ENCODE measurements at regions of chr3 and their contacts with region 1.

Region 1: GRCh38 chr3:14774431-14774830 is 44.3 kb upstream of the FGD5 start:
- DNase-seq: peak; percentile 20
- ATAC-seq: peak; percentile 36
- H3K4me3 Mint-ChIP-seq: no peak overlapping the region
- H3K27ac Mint-ChIP-seq: no peak overlapping the region
- H3K4me1 Mint-ChIP-seq: peaks cover 22% of the 10 kb centered on the region
- H3K27me3 Mint-ChIP-seq: no peaks in the 10 kb centered on the region
- CTCF ChIP-seq: no peak

Region 2: GRCh38 chr3:14646589-14647413 is 127.6 kb before region 1 on chr3:
- CTCF ChIA-PET with region 1: no interaction called
- POLR2A ChIA-PET with region 1: no interaction called
- DNase-seq: no peak
- ATAC-seq: peak; percentile 27
- H3K4me3 Mint-ChIP-seq: no peak overlapping the region
- H3K27ac Mint-ChIP-seq: peak overlapping the region; percentile 43; the same call in 1 of the 2 replicates
- H3K4me1 Mint-ChIP-seq: peaks cover 3% of the 10 kb centered on the region
- H3K27me3 Mint-ChIP-seq: peaks cover 22% of the 10 kb centered on the region
- CTCF ChIP-seq: no peak

Region 3: DNA sequence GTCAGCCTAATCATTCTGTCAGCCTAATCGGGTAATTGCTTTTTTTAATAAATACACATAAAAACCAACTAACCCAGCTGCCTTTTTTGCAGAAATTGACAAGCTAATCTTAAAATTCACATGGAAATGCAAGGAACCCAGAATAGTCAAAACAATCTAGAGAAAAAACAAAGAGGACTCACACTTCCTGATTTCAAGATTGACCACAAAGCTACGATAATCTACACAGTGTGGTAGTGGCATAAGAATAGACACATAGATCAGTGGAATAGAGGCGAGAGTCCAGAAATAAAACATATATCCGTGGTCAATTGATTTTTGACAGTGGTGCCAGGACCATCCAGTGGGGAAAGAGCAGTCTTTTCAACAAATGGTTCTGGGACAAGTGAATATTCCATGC is 101.8 kb before region 1 on chr3:
- CTCF ChIA-PET with region 1: interaction called, 14 read pairs
- POLR2A ChIA-PET with region 1: no interaction called
- DNase-seq: no peak
- ATAC-seq: no peak
- H3K4me3 Mint-ChIP-seq: no peak overlapping the region
- H3K27ac Mint-ChIP-seq: no peak overlapping the region
- H3K4me1 Mint-ChIP-seq: no peaks in the 10 kb centered on the region
- H3K27me3 Mint-ChIP-seq: no peaks in the 10 kb centered on the region
- CTCF ChIP-seq: no peak

Region 4: GRCh38 chr3:14740983-14741382 is 33.4 kb before region 1 on chr3:
- CTCF ChIA-PET with region 1: no interaction called
- POLR2A ChIA-PET with region 1: no interaction called
- DNase-seq: no peak
- ATAC-seq: no peak
- H3K4me3 Mint-ChIP-seq: no peak overlapping the region
- H3K27ac Mint-ChIP-seq: no peak overlapping the region
- H3K4me1 Mint-ChIP-seq: no peaks in the 10 kb centered on the region
- H3K27me3 Mint-ChIP-seq: peaks cover 10% of the 10 kb centered on the region
- CTCF ChIP-seq: no peak

Region 5: GRCh38 chr3:14761118-14761672 is 13.2 kb before region 1 on chr3:
- CTCF ChIA-PET with region 1: interaction called, 12 read pairs
- POLR2A ChIA-PET with region 1: no interaction called
- DNase-seq: peak; percentile 35
- ATAC-seq: peak; percentile 83
- H3K4me3 Mint-ChIP-seq: no peak overlapping the region
- H3K27ac Mint-ChIP-seq: no peak overlapping the region
- H3K4me1 Mint-ChIP-seq: peaks cover 4% of the 10 kb centered on the region
- H3K27me3 Mint-ChIP-seq: no peaks in the 10 kb centered on the region; the same call in 1 of the 2 replicates
- CTCF ChIP-seq: no peak